Left cardiac atrium (tissue), 4 donors: ENCODE measurements at regions of chr3 and their contacts with region 1.

Region 1: DNA sequence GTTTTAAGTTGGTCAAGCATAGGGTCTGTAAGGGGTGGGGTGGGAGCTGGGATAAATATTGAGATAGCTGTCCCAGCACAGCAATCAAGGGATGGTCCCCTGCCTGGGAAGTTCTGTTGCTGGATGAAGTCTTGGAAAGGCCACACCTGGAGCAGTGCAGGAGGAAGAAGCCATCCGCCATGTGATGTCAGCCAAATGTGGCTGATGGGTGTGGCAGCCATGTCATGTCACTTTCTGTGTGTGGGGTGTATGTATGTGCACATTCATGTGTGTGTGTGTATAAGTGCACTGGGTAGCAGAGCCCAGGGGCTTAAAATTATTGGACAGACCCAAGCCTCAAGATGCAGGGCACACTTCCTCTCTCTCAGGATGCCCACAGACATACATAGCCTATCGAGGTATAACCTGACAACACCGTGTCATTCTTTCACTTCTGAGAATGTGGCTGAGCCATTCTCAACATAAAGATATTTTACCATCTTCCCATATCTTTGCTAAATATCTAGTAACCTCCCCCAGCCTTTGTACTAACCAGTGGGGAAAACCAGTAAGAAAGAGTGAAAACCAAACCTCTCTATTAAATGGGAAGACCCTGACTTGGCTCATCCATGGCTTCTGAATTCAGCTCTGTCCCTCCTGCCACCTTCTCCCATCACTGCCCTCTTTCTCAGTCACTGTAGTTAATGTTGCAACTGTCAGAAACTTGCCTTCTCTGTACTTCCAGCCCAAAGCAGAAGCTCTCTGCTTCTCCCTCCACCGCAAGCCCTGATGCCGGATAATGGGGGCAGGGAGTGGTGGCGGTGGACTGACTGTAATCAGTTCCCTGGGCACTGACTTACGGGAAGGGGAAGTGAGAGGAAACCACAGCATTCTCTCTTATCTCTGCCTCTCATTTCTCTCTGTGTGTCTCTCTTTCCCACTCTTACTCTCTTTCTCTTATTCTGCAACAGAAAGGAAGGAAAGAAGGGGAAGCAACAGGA is 11.2 kb downstream of the TNFSF10 start:
- DNase-seq: peak; percentile 79
- ATAC-seq: peak; percentile 67 to 77

Region 2: DNA sequence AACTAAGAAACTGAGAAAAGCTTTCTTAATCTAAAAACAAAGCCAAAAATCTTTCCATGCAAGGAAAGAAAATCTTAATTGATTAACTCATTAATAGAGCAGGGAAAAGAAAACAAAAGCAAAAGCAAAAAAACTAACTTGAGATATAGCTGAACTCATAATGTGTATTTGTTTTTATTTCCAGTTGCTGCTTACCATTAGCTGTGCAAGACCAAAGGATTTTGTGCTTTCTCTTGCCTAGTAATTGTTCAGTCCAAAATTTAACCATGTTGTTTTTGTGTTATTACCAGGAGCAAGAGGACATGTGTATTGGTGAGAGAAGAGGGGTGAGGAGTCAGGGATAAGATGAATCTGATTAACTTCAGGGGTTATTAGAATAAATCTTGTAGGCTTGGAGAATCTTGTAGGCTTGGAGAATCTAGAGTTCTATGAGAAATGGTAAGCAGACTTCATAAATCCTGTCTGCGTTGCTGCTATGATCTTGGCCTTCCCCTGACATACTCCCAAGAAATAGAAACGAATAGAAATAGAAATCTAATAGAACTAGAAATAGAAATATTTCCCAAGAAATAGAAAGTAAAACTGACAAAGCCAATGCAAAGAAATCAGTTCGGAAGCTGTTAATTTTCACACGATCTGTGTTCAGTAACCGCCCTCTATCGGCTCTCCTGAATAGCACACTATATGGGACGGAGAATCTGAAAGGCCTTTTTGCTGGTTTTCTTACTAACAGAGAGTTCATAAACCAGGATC is 83.7 kb after region 1 on chr3:
- intact Hi-C with region 1: loop called in 1 of 2 experiments (anchors 10 kb)
- DNase-seq: no peak
- ATAC-seq: peak; percentile 80 to 81